Breast epithelium (tissue), 4 donors: ENCODE measurements at regions of chr15 and their contacts with region 1.

Region 1: DNA sequence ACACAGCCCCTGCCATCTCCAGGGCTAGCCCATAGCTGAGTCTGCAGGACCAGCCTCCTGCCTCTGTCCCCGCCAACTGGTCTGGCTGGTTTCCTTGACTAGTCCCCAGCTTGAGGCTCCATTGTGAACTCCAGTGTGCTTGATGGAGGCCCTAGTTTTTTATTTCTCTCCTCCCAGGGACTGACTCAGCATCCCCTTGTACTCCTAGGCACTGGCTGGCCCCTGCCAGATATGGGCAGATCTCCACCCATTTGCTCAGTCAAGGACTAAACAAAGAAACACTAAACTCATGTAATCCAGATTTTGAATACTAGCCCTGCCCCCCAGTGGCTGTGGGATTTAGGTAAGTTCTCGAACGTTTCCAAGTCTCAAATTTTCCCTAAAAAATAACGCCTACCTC is 415.4 kb upstream of the RORA start:
- DNase-seq: no peak
- H3K4me3 ChIP-seq: no peak overlapping the region
- H3K27ac ChIP-seq: no peak overlapping the region
- H3K4me1 ChIP-seq: no peaks in the 10 kb centered on the region
- H3K27me3 ChIP-seq: no peaks in the 10 kb centered on the region
- CTCF ChIP-seq: no peak
- POLR2A ChIP-seq: no peak

Region 2: DNA sequence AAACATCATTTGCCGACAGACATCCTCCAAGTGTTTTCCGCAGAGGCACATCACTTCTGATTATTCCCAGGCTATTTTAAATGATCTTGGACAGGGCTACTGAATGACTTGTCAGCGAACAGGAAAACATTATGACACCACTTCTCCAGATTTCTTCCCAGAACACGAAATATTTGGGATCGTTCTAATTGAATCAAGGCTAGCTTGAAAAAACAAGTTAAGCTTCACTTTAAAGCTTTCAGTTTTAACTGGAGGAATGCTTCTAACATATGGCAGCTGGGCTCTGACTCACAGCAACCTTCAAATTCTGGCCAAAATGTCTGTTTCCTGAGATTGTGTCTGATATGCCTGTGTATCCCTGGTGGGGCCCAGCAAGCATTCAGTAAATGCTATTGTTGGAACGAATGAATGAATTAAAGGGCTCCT is 1038.7 kb before region 1 on chr15:
- intact Hi-C with region 1: loop called (anchors 5 kb)
- DNase-seq: no peak
- H3K4me3 ChIP-seq: peak overlapping the region in 1 of 3 donors; percentile 5
- H3K27ac ChIP-seq: peak overlapping the region in 1 of 2 donors; percentile 33
- H3K4me1 ChIP-seq: no peaks in the 10 kb centered on the region
- H3K27me3 ChIP-seq: no peaks in the 10 kb centered on the region
- CTCF ChIP-seq: no peak
- POLR2A ChIP-seq: no peak

Region 3: DNA sequence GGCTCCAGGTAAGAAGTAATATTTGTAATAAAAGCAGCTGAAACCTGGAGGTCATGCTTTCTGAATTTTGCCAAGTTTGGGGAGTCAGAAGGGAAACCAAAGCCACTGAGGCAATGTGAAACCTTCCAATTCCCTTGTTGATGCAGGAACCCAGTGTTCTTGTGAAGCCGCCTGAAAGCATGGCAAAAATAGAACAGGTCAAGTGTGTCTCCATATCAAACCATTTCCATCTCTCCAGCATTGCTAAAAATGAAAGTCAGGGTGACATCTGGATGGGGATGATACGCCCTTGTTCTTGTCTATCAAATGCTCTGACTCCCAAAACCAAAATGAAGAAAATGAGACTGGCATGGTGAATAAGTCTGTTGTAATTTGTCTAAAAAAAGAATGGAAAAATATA is 53.2 kb after region 1 on chr15:
- intact Hi-C with region 1: loop called (anchors 2 kb)
- DNase-seq: no peak
- H3K4me3 ChIP-seq: no peak overlapping the region
- H3K27ac ChIP-seq: no peak overlapping the region
- H3K4me1 ChIP-seq: no peaks in the 10 kb centered on the region
- H3K27me3 ChIP-seq: no peaks in the 10 kb centered on the region
- CTCF ChIP-seq: no peak
- POLR2A ChIP-seq: no peak

Region 4: DNA sequence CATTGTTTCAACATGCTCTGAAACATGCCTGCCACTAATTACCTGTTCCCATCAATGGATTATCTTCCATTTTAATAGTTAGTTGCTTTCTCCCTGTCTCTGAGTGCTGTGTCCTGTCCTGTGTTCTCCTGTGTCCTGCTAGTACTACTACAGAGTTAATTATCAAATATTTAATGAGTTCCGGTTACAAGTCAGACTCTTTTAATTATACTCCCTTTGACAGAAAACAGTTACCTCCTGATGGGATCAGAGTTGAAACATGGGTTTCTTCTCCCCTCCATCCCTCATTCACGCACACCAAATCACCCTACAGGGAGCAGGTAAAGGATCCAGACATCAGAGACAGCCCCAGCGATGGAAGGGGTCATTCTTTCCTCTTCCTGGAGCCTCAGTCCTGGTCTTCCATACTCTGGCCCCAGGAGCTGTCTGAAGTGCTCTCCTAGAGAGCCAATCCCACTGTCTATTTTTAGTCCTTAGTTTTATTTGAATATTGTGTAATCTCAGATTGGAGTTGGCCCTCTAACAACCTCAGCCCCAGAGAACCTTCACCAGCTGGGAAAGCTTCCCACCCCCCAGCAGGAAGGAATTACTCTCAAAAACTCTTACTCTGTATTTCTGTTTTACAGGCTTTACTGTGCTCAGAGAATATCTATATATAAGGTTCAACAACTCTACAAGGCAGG is 657.6 kb after region 1 on chr15:
- intact Hi-C with region 1: no loop called
- DNase-seq: no peak
- H3K4me3 ChIP-seq: no peak overlapping the region
- H3K27ac ChIP-seq: no peak overlapping the region
- H3K4me1 ChIP-seq: no peaks in the 10 kb centered on the region
- H3K27me3 ChIP-seq: no peaks in the 10 kb centered on the region
- CTCF ChIP-seq: no peak
- POLR2A ChIP-seq: no peak